Head of caudate nucleus (tissue), 42 donors: ENCODE measurements at regions of chr7 and their contacts with region 1.

Region 1: GRCh38 chr7:149422129-149422913 is 38.5 kb downstream of the ZNF777 start:
- DNase-seq: peak in 33 of 42 donors; percentile 21 to 71 (median 46)

Region 2: GRCh38 chr7:149355390-149356048 is 66.8 kb before region 1 on chr7:
- intact Hi-C with region 1: no loop called
- DNase-seq: no peak

Region 3: DNA sequence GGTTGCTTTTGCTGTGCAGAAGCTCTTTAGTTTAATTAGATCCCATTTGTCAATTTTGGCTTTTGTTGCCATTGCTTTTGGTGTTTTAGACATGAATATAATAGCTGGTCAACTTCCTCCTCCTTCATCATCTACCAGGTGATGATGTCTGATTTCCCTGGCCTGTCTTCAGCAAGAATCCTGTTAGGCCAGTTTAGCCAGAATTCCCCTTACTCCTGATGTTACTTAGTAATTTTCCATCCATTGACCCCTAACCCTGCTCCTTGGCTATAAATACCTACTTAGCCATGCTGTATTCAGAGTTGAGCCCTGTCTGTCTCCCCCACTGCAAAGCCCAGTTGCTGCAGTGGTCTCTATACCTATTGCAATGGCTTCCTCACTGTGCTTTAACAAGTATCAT is 52.8 kb before region 1 on chr7:
- intact Hi-C with region 1: no loop called
- DNase-seq: no peak

Region 4: DNA sequence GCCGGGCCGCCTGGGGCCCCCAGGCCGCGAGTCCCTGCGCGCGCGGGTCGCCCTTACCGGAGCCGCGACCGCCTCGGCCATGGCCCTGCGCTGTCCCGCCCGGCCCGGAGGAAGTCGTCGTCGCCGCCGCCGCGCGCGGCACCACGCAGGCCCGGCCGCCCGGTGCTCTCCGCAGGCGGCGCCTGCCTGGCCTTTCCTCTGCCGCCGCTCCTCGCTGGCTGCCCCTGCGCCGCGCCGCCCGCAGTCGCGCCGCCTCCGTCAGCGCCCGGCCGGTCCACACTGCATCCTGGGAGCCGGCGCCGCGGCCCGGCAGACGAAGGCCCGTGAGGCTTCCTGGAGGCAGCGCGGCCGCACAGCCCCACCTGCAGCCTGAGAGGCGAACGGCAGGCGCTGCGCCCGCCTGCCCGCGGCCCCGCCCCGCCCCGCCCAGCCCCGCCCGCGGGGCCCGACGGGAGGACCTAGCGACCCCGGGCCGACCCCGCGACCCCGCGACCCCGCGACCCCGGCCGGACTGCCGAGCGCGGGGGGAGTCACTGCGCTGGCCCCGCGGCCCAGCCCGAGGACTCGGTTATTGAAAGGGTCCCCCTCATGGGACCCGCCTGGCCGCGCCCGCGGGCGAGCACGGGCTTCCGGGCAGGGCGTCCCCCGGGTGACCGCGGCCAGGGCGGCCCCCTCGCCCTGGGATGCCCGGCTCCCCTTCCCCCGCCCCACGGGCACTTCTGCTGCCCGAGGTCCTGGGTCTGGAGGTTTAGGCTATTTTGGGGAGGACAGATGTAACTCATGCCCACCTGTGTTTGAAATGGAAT is 75.3 kb after region 1 on chr7 and contains the start of gene ZNF746:
- intact Hi-C with region 1: loop called (anchors 10 kb)
- DNase-seq: peak in 41 of 42 donors; percentile 44 to 89 (median 78)

Region 5: GRCh38 chr7:149635561-149636329 is 213.4 kb after region 1 on chr7:
- intact Hi-C with region 1: no loop called
- DNase-seq: peak in 1 of 42 donors; percentile 25